ENCODE measurements at regions of chr11 and their contacts with region 1.

Region 1: DNA sequence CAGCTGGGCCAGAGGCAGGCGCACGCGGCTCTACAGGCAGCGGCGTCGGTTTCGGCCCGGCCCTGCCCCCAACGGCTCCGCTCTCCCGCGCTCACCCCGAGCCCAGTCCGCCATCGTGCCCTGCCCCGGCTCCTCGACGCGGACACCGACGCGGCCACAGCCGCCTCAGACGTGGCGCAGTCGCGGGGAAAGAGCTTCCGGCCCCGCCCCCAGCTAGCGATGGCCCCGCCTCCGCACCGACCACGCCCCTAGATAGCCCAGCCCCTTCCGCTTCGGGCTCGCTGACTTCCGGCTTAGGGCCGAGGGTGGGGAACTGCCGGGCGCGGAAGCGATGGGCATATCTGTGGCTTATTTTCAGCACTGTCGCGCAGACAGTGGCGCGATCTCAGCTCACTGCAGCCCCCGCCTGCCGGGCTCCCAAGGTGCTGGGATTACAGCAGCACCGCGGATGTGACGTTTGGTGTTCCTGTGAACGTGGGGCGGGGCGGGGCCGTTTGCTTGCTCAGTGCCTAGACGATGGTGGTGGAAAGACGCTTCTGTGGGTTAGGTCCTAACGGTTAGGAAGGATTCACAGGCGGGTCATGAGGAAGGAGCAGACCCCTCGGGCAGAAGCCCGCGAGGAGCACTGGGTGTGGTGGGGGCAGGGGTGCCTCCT is at the starts of genes BET1L and RIC8A:
- DNase-seq: peak; percentile 92 to 99 (median 98)
- ATAC-seq: peak; percentile 93
- H3K4me3 ChIP-seq: peak within 1 kb of the TSS; percentile 98
- H3K4me3 Mint-ChIP-seq: peak within 1 kb of the TSS; percentile 89 to 100 (median 96)
- H3K27ac ChIP-seq: peak within 1 kb of the TSS; percentile 93
- H3K27ac Mint-ChIP-seq: peak within 1 kb of the TSS; percentile 97 to 100 (median 99)
- H3K4me1 ChIP-seq: peaks cover 28 to 57% of the 10 kb centered on the region in 2 donors
- H3K4me1 Mint-ChIP-seq: peaks cover 17 to 72% (median 50%) of the 10 kb centered on the region in 7 donors
- H3K27me3 ChIP-seq: no peaks in the 10 kb centered on the region
- H3K27me3 Mint-ChIP-seq: no peaks in the 10 kb centered on the region
- total RNA-seq, gene BET1L: 47.1 to 125 (median 63.2) TPM
- total RNA-seq, gene RIC8A: 74.4 to 119 (median 92.0) TPM

Region 2: DNA sequence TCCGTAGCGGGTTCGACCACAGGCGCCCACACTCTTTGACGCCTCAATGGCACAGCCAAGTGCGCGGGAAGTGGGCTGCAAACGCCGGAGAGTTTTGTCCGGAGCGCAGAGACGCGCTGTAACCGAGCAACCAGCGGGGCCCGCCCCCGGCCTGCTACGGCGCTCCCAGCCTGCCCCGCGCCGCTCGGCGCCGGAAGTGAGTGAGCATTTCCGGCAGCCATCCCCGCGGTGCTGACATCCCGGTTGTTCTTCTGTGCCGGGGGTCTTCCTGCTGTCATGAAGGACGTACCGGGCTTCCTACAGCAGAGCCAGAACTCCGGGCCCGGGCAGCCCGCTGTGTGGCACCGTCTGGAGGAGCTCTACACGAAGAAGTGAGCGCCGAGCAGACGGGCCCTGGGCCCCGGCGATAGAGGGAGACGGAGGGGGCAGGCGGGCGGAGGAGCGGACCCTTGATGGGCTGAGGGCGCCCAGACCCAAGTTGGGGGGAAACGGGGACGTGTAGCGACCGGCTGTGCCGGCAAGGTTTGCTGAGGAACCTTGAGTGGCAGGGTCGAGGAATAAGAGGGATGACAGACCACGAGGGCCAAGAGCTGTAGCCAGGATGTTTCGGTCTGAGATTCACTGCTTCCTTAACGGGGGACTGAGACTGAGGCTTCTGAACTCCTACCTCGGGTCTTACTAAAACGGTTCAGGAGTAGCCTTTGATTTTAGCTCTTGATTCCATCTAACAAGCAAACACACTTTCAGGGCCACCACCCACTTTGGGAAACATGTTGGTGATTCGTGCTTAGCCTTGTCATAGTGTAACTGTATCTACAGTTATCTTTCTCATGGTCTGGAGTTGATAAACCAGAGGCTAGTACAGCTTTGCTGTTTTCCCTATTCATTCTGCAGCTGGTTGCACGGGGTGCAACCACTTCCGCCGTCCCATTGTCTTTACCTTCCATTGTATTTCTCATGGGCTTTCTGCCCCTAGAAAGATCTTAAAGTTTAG is 29.7 kb after region 1 on chr11 and contains the start of gene PSMD13:
- CTCF ChIA-PET with region 1: interaction called, 5 read pairs
- POLR2A ChIA-PET with region 1: interaction called, 83 read pairs
- intact Hi-C with region 1: loop called (anchors 1 kb)
- DNase-seq: peak; percentile 82 to 92 (median 88)
- ATAC-seq: peak; percentile 88
- H3K4me3 ChIP-seq: peak within 1 kb of the TSS; percentile 100
- H3K4me3 Mint-ChIP-seq: peak within 1 kb of the TSS; percentile 84 to 99 (median 96)
- H3K27ac ChIP-seq: peak within 1 kb of the TSS; percentile 97
- H3K27ac Mint-ChIP-seq: peak within 1 kb of the TSS; percentile 84 to 100 (median 100)
- H3K4me1 ChIP-seq: peaks cover 17 to 23% of the 10 kb centered on the region in 2 donors
- H3K4me1 Mint-ChIP-seq: peaks cover 26 to 66% (median 53%) of the 10 kb centered on the region in 7 donors
- H3K27me3 ChIP-seq: no peaks in the 10 kb centered on the region
- H3K27me3 Mint-ChIP-seq: no peaks in the 10 kb centered on the region
- total RNA-seq, gene PSMD13: 64.3 to 172 (median 86.9) TPM

Region 3: GRCh38 chr11:279966-280582 is 72.7 kb after region 1 on chr11:
- CTCF ChIA-PET with region 1: interaction called, 4 read pairs
- POLR2A ChIA-PET with region 1: interaction called, 43 read pairs
- intact Hi-C with region 1: loop called in 1 of 2 experiments (anchors 2 kb)
- DNase-seq: peak in 6 of 9 donors; percentile 40 to 59 (median 54)
- ATAC-seq: peak; percentile 70
- H3K4me3 ChIP-seq: peak overlapping the region; percentile 52
- H3K4me3 Mint-ChIP-seq: peak overlapping the region; percentile 80 to 93 (median 89)
- H3K27ac ChIP-seq: peak overlapping the region; percentile 61
- H3K27ac Mint-ChIP-seq: peak overlapping the region in 6 of 9 donors; percentile 75 to 90 (median 82)
- H3K4me1 ChIP-seq: peaks cover 22% of the 10 kb centered on the region in 2 donors
- H3K4me1 Mint-ChIP-seq: peaks cover 37 to 67% (median 52%) of the 10 kb centered on the region in 7 donors
- H3K27me3 ChIP-seq: no peaks in the 10 kb centered on the region
- H3K27me3 Mint-ChIP-seq: peaks cover 0 to 53% (median 0%) of the 10 kb centered on the region in 5 donors

Region 4: GRCh38 chr11:355581-356458 is 148.5 kb after region 1 on chr11:
- CTCF ChIA-PET with region 1: no interaction called
- POLR2A ChIA-PET with region 1: interaction called, 16 read pairs
- intact Hi-C with region 1: loop called in 1 of 2 experiments (anchors 1 kb)
- DNase-seq: peak; percentile 74 to 92 (median 90)
- ATAC-seq: peak; percentile 89
- H3K4me3 ChIP-seq: peak overlapping the region; percentile 66
- H3K4me3 Mint-ChIP-seq: peak overlapping the region in 8 of 10 donors; percentile 83 to 93 (median 88)
- H3K27ac ChIP-seq: peak overlapping the region; percentile 97
- H3K27ac Mint-ChIP-seq: peak overlapping the region in 6 of 9 donors; percentile 89 to 99 (median 98)
- H3K4me1 ChIP-seq: peaks cover 9 to 19% of the 10 kb centered on the region in 2 donors
- H3K4me1 Mint-ChIP-seq: peaks cover 29 to 45% (median 37%) of the 10 kb centered on the region in 7 donors
- H3K27me3 ChIP-seq: no peaks in the 10 kb centered on the region
- H3K27me3 Mint-ChIP-seq: peaks cover 0 to 6% (median 0%) of the 10 kb centered on the region in 5 donors

Region 5: GRCh38 chr11:447923-448731 is 240.8 kb after region 1 on chr11:
- CTCF ChIA-PET with region 1: no interaction called
- POLR2A ChIA-PET with region 1: interaction called, 35 read pairs
- intact Hi-C with region 1: loop called (anchors 1 kb)
- DNase-seq: peak; percentile 86 to 98 (median 93)
- ATAC-seq: peak; percentile 86
- H3K4me3 ChIP-seq: peak overlapping the region; percentile 74
- H3K4me3 Mint-ChIP-seq: peak overlapping the region; percentile 84 to 95 (median 89)
- H3K27ac ChIP-seq: peak overlapping the region; percentile 98
- H3K27ac Mint-ChIP-seq: peak overlapping the region; percentile 79 to 98 (median 95)
- H3K4me1 ChIP-seq: peaks cover 16 to 24% of the 10 kb centered on the region in 2 donors
- H3K4me1 Mint-ChIP-seq: peaks cover 9 to 25% (median 22%) of the 10 kb centered on the region in 7 donors
- H3K27me3 ChIP-seq: no peaks in the 10 kb centered on the region
- H3K27me3 Mint-ChIP-seq: peaks cover 0 to 7% (median 0%) of the 10 kb centered on the region in 5 donors

Region 6: GRCh38 chr11:575996-576768 is 368.8 kb after region 1 on chr11 and contains the start of gene PHRF1:
- CTCF ChIA-PET with region 1: no interaction called
- POLR2A ChIA-PET with region 1: interaction called, 4 read pairs
- intact Hi-C with region 1: loop called in 1 of 2 experiments (anchors 2 kb)
- DNase-seq: peak; percentile 93 to 99 (median 97)
- ATAC-seq: peak; percentile 93
- H3K4me3 ChIP-seq: peak within 1 kb of the TSS; percentile 98
- H3K4me3 Mint-ChIP-seq: peak within 1 kb of the TSS; percentile 93 to 99 (median 98)
- H3K27ac ChIP-seq: peak within 1 kb of the TSS; percentile 98
- H3K27ac Mint-ChIP-seq: peak within 1 kb of the TSS; percentile 96 to 100 (median 99)
- H3K4me1 ChIP-seq: peaks cover 26 to 44% of the 10 kb centered on the region in 2 donors
- H3K4me1 Mint-ChIP-seq: peaks cover 42 to 60% (median 46%) of the 10 kb centered on the region in 7 donors
- H3K27me3 ChIP-seq: no peaks in the 10 kb centered on the region
- H3K27me3 Mint-ChIP-seq: peaks cover 0 to 9% (median 0%) of the 10 kb centered on the region in 5 donors
- total RNA-seq, gene PHRF1: 47.3 to 55.2 (median 49.4) TPM

Region 7: DNA sequence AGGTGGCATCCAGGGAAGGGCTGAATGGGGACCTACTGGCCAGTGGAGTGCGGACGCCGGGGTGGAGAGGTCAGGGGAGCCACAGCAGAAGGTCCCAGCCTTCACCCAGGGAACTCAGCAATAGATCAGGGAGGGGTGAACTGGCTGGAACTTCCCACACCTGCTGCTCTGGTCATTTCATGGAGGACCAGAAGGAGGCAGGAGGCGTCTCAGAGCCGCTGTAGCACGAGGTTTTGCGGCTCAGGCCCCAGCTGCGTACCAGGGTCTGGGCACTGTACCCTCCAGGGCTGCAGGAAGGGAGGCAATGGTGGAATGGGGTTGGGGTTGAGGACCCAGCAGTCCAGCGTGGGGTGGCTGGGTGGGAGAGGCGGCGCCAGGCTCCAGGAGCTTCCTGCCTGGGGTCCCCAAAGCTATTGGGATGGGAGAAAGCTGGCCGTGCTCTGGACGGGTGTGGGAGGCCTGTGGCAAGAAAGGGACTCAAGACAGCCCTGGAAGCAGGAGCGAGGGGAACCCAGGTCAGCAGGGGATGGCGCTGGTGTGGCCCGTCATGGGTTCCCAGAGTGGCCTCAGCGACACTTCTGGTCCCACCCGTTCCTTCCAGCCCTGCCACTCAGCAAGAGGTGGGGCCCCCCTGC is 1162.2 kb after region 1 on chr11:
- CTCF ChIA-PET with region 1: no interaction called
- POLR2A ChIA-PET with region 1: no interaction called
- intact Hi-C with region 1: no loop called
- DNase-seq: peak in 1 of 9 donors; percentile 5
- ATAC-seq: no peak
- H3K4me3 ChIP-seq: no peak overlapping the region
- H3K4me3 Mint-ChIP-seq: no peak overlapping the region
- H3K27ac ChIP-seq: no peak overlapping the region
- H3K27ac Mint-ChIP-seq: peak overlapping the region in 1 of 9 donors; percentile 77
- H3K4me1 ChIP-seq: no peaks in the 10 kb centered on the region
- H3K4me1 Mint-ChIP-seq: no peaks in the 10 kb centered on the region
- H3K27me3 ChIP-seq: no peaks in the 10 kb centered on the region
- H3K27me3 Mint-ChIP-seq: peaks cover 0 to 13% (median 0%) of the 10 kb centered on the region in 5 donors

Measured in naive thymus-derived CD4-positive, alpha-beta T cell (primary cell).